ENCODE measurements at regions of chrX and their contacts with region 1.

Region 1: GRCh38 chrX:41275661-41276609 is 58.0 kb upstream of the DDX3X start:
- DNase-seq: peak; percentile 39
- ATAC-seq: peak; percentile 68
- H3K4me3 Mint-ChIP-seq: peak overlapping the region; percentile 83
- H3K27ac Mint-ChIP-seq: no peak overlapping the region
- H3K4me1 Mint-ChIP-seq: peaks cover 8% of the 10 kb centered on the region
- H3K27me3 Mint-ChIP-seq: no peaks in the 10 kb centered on the region
- CTCF ChIP-seq: no peak

Region 2: GRCh38 chrX:41441934-41442823 is 166.2 kb after region 1 on chrX:
- CTCF ChIA-PET with region 1: no interaction called
- POLR2A ChIA-PET with region 1: interaction called, 3 read pairs
- intact Hi-C with region 1: loop called (anchors 1 kb)
- DNase-seq: peak; percentile 87
- ATAC-seq: peak; percentile 92
- H3K4me3 Mint-ChIP-seq: peak overlapping the region; percentile 73
- H3K27ac Mint-ChIP-seq: peak overlapping the region; percentile 53
- H3K4me1 Mint-ChIP-seq: peaks cover 25% of the 10 kb centered on the region
- H3K27me3 Mint-ChIP-seq: no peaks in the 10 kb centered on the region
- CTCF ChIP-seq: no peak

Region 3: DNA sequence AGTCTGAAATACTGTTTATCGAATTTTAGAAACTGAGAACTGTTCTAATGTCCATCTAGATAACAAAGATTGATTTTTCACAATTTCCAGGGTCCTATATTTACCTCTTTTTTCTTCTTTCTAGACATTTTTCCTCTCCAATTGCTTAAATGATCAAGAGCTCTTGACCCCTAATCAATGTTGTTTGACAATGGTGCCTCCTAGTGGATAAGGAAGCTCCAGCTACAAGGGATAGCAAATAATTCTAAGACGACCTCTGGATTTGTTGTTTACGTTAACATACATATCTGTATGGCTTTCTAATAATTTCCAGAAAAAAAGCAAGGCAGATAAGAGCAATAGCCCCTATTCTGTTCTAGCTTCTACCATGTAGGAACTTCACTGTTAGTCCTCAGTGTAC is 483.9 kb after region 1 on chrX:
- CTCF ChIA-PET with region 1: interaction called, 3 read pairs
- POLR2A ChIA-PET with region 1: no interaction called
- intact Hi-C with region 1: loop called (anchors 2 kb)
- DNase-seq: no peak
- ATAC-seq: no peak
- H3K4me3 Mint-ChIP-seq: no peak overlapping the region
- H3K27ac Mint-ChIP-seq: no peak overlapping the region
- H3K4me1 Mint-ChIP-seq: peaks cover 1% of the 10 kb centered on the region
- H3K27me3 Mint-ChIP-seq: no peaks in the 10 kb centered on the region
- CTCF ChIP-seq: no peak

Region 4: GRCh38 chrX:42107495-42108488 is 831.9 kb after region 1 on chrX:
- CTCF ChIA-PET with region 1: no interaction called
- POLR2A ChIA-PET with region 1: no interaction called
- intact Hi-C with region 1: no loop called
- DNase-seq: no peak
- ATAC-seq: no peak
- H3K4me3 Mint-ChIP-seq: no peak overlapping the region
- H3K27ac Mint-ChIP-seq: peak overlapping the region; percentile 50
- H3K4me1 Mint-ChIP-seq: peaks cover 10% of the 10 kb centered on the region
- H3K27me3 Mint-ChIP-seq: no peaks in the 10 kb centered on the region
- CTCF ChIP-seq: no peak